ENCODE measurements at regions of chr16 and their contacts with region 1.

Region 1: GRCh38 chr16:70454222-70455034 is at the start of gene FCSK:
- DNase-seq: peak; percentile 61
- H3K4me3 Mint-ChIP-seq: peak within 1 kb of the TSS; percentile 88
- H3K27ac Mint-ChIP-seq: peak within 1 kb of the TSS; percentile 78
- H3K4me1 Mint-ChIP-seq: peaks cover 16% of the 10 kb centered on the region
- H3K27me3 Mint-ChIP-seq: no peaks in the 10 kb centered on the region
- total RNA-seq, gene FCSK: 19.7 and 21.9 TPM in 2 replicates

Region 2: DNA sequence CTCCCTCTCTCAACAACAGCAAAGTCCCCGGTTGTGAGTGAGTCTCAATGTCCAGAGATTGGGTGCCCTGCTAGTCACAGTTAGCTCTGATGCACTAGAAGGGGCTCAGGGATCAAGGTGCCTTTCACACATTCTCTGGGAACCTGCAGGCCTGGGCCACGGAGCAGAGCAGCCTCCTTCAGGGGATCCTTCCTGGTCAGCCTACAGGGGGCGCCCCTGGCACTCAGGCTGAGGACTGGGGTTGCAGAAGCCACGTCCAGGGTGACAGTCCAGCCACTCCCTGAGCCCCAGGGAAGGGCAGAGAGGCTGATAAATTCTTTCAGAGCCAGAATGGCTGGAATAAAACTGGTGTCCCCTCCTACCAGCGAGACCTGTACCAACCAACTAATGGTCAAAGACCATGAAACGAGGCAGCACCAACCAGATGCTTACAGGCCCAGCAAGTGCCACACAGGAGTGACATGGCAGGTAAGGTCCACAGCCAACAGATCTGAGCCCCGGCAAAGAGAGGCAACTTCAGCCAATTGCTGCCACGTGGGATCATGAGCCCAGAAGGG is 59.0 kb before region 1 on chr16:
- intact Hi-C with region 1: loop called (anchors 1 kb)
- DNase-seq: peak; percentile 50
- H3K4me3 Mint-ChIP-seq: no peak overlapping the region
- H3K27ac Mint-ChIP-seq: no peak overlapping the region
- H3K4me1 Mint-ChIP-seq: no peaks in the 10 kb centered on the region
- H3K27me3 Mint-ChIP-seq: no peaks in the 10 kb centered on the region

Region 3: GRCh38 chr16:70438969-70439862 is 15.2 kb before region 1 on chr16 and contains the start of gene ST3GAL2:
- intact Hi-C with region 1: loop called (anchors 1 kb)
- DNase-seq: peak; percentile 91
- H3K4me3 Mint-ChIP-seq: peak within 1 kb of the TSS; percentile 91
- H3K27ac Mint-ChIP-seq: peak within 1 kb of the TSS; percentile 89
- H3K4me1 Mint-ChIP-seq: peaks cover 21% of the 10 kb centered on the region
- H3K27me3 Mint-ChIP-seq: no peaks in the 10 kb centered on the region
- total RNA-seq, gene ST3GAL2: 33.0 and 35.1 TPM in 2 replicates

Measured in activated T-helper 2 cell treated with anti-CD3 and anti-CD28 coated beads, Interferon-gamma antibody, Interleukin-2, Interleukin-4, amounts not matched to agents 10 μg/mL and 5 μg/mL and 100 μg/mL, durations not matched to agents 14 hours and 24 hours and 36 hours (primary cell).